ENCODE measurements at regions of chr22 and their contacts with region 1.

Region 1: DNA sequence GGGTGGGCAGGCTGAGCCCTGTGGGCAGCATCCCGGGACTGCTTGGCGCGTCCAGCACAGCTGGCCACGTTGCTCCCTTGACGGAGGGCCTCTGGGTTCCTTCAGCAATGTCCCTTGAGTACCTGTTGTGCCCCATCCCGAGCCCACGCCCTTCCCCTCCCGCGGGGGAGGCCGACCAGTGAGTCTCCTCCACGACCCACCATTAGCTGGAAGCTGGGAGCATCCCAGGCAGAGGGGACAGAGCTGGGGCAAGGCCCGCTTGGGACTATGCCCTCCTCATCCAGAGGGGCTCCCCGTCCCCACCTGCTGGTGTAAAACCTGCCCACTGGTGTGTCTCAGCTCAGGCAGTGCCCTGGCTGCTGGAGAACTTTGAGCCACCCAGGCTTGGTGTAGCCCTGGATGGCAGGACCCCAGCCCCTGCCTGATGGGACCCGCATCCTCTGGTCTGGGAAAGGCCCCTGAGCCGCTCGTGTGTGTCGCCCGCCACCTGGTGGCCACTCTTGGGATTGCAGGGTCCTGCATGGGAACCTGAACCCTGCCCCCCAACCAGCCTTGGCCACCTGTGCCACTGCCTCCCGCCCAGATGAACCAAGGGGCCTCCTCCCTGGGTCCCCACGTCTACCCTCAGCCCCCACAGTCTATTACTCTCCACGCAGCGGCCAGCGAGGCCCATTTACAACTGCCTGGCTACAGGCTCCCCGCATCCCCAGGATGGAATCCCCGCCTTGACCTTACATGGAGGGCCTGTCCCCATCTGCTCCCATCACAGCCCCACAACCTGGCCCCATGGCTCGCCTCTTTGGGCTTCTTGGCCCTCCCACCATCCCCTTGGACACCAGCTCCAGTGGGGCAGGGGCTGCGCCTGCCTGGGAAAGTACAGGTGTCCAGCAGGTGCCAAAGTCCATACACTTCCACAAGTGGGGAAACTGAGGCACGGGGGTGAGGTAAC is 16.6 kb upstream of the ARHGAP8 start:
- DNase-seq: peak; percentile 89
- CTCF ChIP-seq: peak; percentile 99

Region 2: GRCh38 chr22:44697423-44698141 is 38.2 kb before region 1 on chr22:
- CTCF ChIA-PET with region 1: interaction called, 66 read pairs
- POLR2A ChIA-PET with region 1: no interaction called
- DNase-seq: peak; percentile 86
- CTCF ChIP-seq: peak; percentile 91

Region 3: DNA sequence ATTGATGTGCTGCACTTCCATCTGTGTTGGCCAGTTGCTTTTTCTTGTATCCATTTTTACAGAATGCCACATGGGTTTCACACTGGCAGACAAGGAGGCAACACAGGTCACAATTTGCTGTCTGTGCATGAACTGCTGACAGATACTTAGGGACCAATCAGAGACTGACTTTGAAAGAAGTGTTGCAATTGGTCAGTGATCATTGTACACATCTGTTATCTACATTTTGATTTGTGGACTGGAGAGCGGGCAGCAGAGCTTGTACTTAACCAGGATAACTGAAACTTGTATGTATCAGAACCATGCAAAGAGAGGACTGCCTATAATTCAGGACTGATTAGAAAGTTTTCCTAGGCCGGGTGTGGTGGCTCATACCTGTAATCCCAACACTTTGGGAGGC is 12.0 kb before region 1 on chr22:
- CTCF ChIA-PET with region 1: interaction called, 32 read pairs
- POLR2A ChIA-PET with region 1: no interaction called
- DNase-seq: no peak
- CTCF ChIP-seq: no peak

Region 4: GRCh38 chr22:44901301-44901700 is 165.5 kb after region 1 on chr22:
- CTCF ChIA-PET with region 1: no interaction called
- POLR2A ChIA-PET with region 1: no interaction called
- DNase-seq: no peak
- CTCF ChIP-seq: no peak

Measured in GM10248 (cell line).